CD8-positive, alpha-beta memory T cell (primary cell): ENCODE measurements at regions of chr4 and their contacts with region 1.

Region 1: GRCh38 chr4:140609548-140610425 is 41.0 kb upstream of the UCP1 start:
- DNase-seq: peak in 1 of 5 donors; percentile 3
- H3K4me3 ChIP-seq: no peak overlapping the region
- H3K4me3 Mint-ChIP-seq: no peak overlapping the region
- H3K27ac ChIP-seq: no peak overlapping the region
- H3K27ac Mint-ChIP-seq: peak overlapping the region in 1 of 8 donors; percentile 69
- H3K4me1 ChIP-seq: no peaks in the 10 kb centered on the region
- H3K4me1 Mint-ChIP-seq: no peaks in the 10 kb centered on the region
- H3K27me3 ChIP-seq: no peaks in the 10 kb centered on the region
- H3K27me3 Mint-ChIP-seq: peaks cover 11 to 29% of the 10 kb centered on the region in 2 donors

Region 2: DNA sequence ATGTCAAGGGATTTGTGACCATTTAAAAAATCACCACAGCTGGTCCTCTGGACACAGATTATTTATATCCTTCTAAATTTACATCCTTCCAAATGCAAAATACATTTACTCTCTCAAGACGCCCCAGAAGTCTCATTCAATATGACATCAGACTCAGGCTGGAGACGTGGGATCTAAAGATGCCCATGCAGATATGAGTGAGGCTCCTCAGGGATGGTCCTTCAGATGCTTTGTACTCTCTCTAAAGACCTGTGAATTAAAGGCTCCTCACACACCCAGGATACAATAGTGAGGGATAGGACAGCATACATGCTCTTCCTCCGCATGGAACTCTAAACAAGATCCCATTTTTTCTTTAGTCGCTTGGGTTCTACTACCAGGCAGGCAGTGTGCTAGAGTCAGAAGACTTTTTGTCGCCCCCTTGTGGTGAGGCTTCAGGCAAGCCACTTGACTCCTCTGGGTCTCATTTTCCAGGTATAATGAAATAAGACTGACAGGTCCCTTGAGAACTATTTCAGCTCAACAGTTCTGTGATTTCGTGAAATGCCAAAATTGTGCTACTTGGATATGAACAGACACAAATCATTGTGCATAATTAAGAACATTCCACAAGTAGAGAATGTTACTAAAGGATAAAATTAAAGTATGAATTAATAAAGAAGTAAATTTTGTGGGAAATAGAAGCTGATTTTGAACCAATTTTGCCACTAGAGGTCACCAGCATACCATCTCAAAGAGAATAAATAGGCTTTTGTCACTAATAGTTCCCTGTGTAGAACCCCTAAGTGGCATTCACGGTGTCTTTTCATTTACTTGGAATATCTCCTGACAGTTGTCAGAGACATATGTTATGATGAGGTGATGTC is 250.0 kb before region 1 on chr4:
- CTCF ChIA-PET with region 1: interaction called, 17 read pairs
- POLR2A ChIA-PET with region 1: no interaction called
- DNase-seq: peak; percentile 56 to 78 (median 63)
- H3K4me3 ChIP-seq: no peak overlapping the region
- H3K4me3 Mint-ChIP-seq: no peak overlapping the region
- H3K27ac ChIP-seq: no peak overlapping the region
- H3K27ac Mint-ChIP-seq: no peak overlapping the region
- H3K4me1 ChIP-seq: no peaks in the 10 kb centered on the region
- H3K4me1 Mint-ChIP-seq: peaks cover 0 to 3% (median 0%) of the 10 kb centered on the region in 3 donors
- H3K27me3 ChIP-seq: no peaks in the 10 kb centered on the region
- H3K27me3 Mint-ChIP-seq: peaks cover 11 to 20% of the 10 kb centered on the region in 2 donors

Region 3: DNA sequence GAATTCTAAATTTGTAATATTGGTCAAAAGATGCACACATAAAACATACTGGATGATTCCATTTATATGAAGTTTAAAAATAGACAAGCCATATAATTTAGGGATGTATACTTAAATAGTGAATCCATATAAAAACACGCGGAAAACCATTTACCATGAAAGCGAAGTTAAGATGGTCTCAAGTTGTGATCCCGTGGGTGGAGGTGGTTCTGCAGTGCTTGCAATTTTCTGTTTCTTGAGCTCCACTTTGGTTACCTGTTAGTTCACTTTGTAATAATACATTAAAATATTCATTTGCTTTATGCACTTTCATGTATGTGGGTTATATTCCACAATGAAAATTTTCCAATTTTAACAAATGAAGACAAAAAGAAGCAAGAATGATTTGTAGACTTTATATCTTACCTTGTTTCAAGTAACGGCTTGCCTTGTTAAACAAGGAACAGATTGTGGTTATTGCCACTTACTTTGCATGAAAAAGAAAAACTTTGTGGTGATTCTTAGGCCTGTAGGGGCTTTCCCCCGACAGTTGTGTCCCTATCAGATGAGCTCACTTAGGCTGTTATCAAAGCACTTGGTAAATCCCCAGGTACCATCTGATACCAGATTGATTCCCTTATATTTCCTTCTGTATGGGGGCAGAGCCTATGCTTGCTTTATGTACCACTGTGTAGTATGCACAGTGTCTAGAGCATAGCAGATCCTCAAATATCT is 53.3 kb before region 1 on chr4:
- CTCF ChIA-PET with region 1: no interaction called
- POLR2A ChIA-PET with region 1: no interaction called
- DNase-seq: peak in 2 of 5 donors; percentile 25 to 48
- H3K4me3 ChIP-seq: no peak overlapping the region
- H3K4me3 Mint-ChIP-seq: no peak overlapping the region
- H3K27ac ChIP-seq: no peak overlapping the region
- H3K27ac Mint-ChIP-seq: peak overlapping the region in 3 of 8 donors; percentile 5 to 91 (median 65)
- H3K4me1 ChIP-seq: peaks cover 8% of the 10 kb centered on the region
- H3K4me1 Mint-ChIP-seq: peaks cover 15 to 22% (median 20%) of the 10 kb centered on the region in 3 donors
- H3K27me3 ChIP-seq: no peaks in the 10 kb centered on the region
- H3K27me3 Mint-ChIP-seq: no peaks in the 10 kb centered on the region